ENCODE measurements at regions of chr6 and their contacts with region 1.

Region 1: DNA sequence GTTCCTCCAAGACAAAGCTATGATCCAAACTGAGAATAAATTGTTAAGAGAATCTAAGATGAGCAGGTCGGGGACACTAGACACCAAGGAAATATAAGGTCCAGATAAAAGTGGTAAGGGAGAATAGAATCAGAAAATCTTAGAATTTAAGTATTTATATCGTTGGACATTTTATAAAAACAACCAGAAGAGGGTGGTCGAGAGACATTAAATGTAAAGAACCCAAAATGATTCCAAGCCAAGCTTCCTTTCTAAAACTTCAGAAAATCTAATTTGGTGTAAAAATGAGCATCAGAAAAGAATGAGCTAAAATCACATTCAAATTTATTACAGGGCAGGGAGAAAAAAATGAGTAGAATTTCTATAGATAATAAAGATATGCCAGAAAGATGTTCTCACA is 97.8 kb upstream of the OGFRL1 start:
- DNase-seq: no peak
- H3K4me3 ChIP-seq: no peak overlapping the region
- H3K27ac ChIP-seq: no peak overlapping the region
- H3K27me3 ChIP-seq: no peaks in the 10 kb centered on the region
- CTCF ChIP-seq: no peak

Region 2: GRCh38 chr6:70933853-70934252 is 257.0 kb before region 1 on chr6:
- in situ Hi-C with region 1: no loop called
- DNase-seq: no peak
- H3K4me3 ChIP-seq: no peak overlapping the region
- H3K27ac ChIP-seq: no peak overlapping the region
- H3K27me3 ChIP-seq: no peaks in the 10 kb centered on the region
- CTCF ChIP-seq: no peak

Region 3: GRCh38 chr6:71349395-71349794 is 158.6 kb after region 1 on chr6:
- in situ Hi-C with region 1: loop called (anchors 10 kb)
- DNase-seq: no peak
- H3K4me3 ChIP-seq: no peak overlapping the region
- H3K27ac ChIP-seq: no peak overlapping the region
- H3K27me3 ChIP-seq: no peaks in the 10 kb centered on the region
- CTCF ChIP-seq: peak; percentile 40